ENCODE measurements at regions of chr10 and their contacts with region 1.

Region 1: GRCh38 chr10:31031558-31032257 is at the start of gene ZNF438:
- DNase-seq: peak; percentile 93
- ATAC-seq: peak; percentile 85
- H3K4me3 Mint-ChIP-seq: peak within 1 kb of the TSS; percentile 84
- H3K27ac Mint-ChIP-seq: peak within 1 kb of the TSS; percentile 97
- H3K4me1 Mint-ChIP-seq: peaks cover 10% of the 10 kb centered on the region
- H3K27me3 Mint-ChIP-seq: no peaks in the 10 kb centered on the region
- total RNA-seq, gene ZNF438: 2.3 to 2.6 TPM

Region 2: GRCh38 chr10:30990971-30991646 is 40.6 kb before region 1 on chr10:
- CTCF ChIA-PET with region 1: no interaction called
- POLR2A ChIA-PET with region 1: no interaction called
- DNase-seq: no peak
- ATAC-seq: no peak
- H3K4me3 Mint-ChIP-seq: no peak overlapping the region
- H3K27ac Mint-ChIP-seq: no peak overlapping the region
- H3K4me1 Mint-ChIP-seq: peaks cover under 1% of the 10 kb centered on the region
- H3K27me3 Mint-ChIP-seq: no peaks in the 10 kb centered on the region

Region 3: GRCh38 chr10:31083765-31084184 is 52.1 kb after region 1 on chr10:
- CTCF ChIA-PET with region 1: interaction called, 13 read pairs
- POLR2A ChIA-PET with region 1: no interaction called
- DNase-seq: peak; percentile 72
- ATAC-seq: peak; percentile 74
- H3K4me3 Mint-ChIP-seq: no peak overlapping the region
- H3K27ac Mint-ChIP-seq: no peak overlapping the region
- H3K4me1 Mint-ChIP-seq: peaks cover 6% of the 10 kb centered on the region
- H3K27me3 Mint-ChIP-seq: peaks cover 2% of the 10 kb centered on the region

Region 4: GRCh38 chr10:31152421-31153135 is 120.9 kb after region 1 on chr10:
- CTCF ChIA-PET with region 1: no interaction called
- POLR2A ChIA-PET with region 1: no interaction called
- DNase-seq: peak; percentile 5
- ATAC-seq: no peak
- H3K4me3 Mint-ChIP-seq: no peak overlapping the region
- H3K27ac Mint-ChIP-seq: no peak overlapping the region
- H3K4me1 Mint-ChIP-seq: peaks cover under 1% of the 10 kb centered on the region
- H3K27me3 Mint-ChIP-seq: no peaks in the 10 kb centered on the region

Region 5: DNA sequence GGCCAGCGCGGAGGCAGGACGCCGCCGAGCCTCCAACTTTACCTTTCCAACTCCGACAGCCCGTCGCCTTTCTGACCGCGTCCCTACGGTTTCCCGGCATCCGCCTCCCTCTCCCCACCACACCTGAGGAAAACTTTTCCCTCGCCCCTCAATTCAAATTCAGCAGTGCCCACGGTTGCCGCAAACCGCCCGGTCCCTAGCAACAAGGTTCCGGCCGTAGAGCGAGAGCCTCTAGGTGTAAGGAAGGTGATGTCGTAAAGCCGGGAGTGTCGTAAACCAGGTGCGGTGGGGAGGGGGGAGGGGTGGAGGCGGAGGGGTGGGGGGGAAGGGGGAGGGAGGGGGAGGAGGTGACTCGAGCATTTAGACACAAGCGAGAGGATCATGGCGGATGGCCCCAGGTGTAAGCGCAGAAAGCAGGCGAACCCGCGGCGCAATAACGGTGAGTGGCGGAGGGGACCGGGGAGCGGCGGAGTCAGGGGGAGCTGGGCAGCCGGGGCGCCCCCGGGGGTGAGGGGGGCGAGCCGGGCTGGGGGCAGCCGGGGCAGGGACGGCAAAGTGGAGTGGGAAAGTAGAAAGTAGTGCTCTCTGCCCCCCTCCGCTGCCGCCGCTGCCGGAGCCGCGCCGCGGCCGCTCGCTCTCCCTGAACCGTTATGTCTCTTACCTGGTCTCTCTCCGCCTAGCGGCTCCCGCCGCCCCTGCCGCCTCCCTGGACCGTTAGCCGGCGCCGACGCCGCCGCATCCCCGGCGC is 287.3 kb after region 1 on chr10 and contains the start of gene ZEB1:
- CTCF ChIA-PET with region 1: interaction called, 3 read pairs
- POLR2A ChIA-PET with region 1: interaction called, 10 read pairs
- DNase-seq: peak; percentile 95
- ATAC-seq: peak; percentile 66
- H3K4me3 Mint-ChIP-seq: peak within 1 kb of the TSS; percentile 96
- H3K27ac Mint-ChIP-seq: peak within 1 kb of the TSS; percentile 99
- H3K4me1 Mint-ChIP-seq: peaks cover 53% of the 10 kb centered on the region
- H3K27me3 Mint-ChIP-seq: no peaks in the 10 kb centered on the region
- total RNA-seq, gene ZEB1: 38.3 to 39.3 TPM